Prostate gland (tissue), 2 donors: ENCODE measurements at regions of chr17 and their contacts with region 1.

Region 1: DNA sequence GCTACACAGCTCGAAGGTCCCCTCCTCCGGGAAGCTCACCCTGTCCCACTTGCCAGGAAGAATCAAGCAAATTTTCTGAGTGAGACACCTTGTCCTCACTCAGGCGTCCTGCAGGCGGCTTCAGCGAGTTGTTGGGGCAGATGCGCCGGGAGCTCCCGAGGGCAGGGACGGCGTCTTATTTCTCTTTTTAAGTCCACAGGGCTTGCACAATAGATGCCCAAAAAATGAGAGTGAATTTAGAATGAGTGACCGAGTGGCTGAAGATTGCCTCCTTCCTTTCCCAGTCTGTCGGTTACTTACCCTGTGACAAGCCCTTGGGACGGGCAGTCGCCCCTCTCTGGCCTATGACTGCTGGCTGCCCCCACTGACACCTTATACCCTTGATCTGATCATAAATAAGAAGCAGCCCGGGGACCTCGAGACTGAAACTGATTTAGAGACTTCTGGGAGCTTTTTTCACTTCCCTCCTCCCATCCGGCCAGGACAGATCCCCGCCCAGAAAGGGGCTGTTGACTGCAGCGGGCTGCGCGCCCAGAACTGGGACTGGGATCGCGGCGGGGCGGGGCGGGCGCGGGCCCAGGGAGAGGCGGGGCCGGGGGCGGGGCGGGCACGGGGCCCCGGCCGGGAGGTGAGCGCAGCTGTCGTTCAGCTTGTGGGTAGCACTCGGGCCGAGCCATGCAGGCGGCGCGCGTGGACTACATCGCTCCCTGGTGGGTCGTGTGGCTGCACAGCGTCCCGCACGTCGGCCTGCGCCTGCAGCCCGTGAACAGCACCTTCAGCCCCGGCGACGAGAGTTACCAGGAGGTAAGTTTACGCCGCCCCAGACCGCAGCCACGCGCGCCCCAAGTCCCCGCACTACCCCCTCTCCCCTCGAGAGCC is at the start of gene TTYH2:
- DNase-seq: peak; percentile 90
- H3K4me3 ChIP-seq: peak within 1 kb of the TSS; percentile 34 to 44
- H3K27ac ChIP-seq: peak within 1 kb of the TSS; percentile 74
- H3K4me1 ChIP-seq: peaks cover 7% of the 10 kb centered on the region
- H3K27me3 ChIP-seq: no peaks in the 10 kb centered on the region
- CTCF ChIP-seq: peak in 1 of 4 experiments; percentile 20
- POLR2A ChIP-seq: peak; percentile 53
- total RNA-seq, gene TTYH2: 7.7 to 43.3 TPM

Region 2: DNA sequence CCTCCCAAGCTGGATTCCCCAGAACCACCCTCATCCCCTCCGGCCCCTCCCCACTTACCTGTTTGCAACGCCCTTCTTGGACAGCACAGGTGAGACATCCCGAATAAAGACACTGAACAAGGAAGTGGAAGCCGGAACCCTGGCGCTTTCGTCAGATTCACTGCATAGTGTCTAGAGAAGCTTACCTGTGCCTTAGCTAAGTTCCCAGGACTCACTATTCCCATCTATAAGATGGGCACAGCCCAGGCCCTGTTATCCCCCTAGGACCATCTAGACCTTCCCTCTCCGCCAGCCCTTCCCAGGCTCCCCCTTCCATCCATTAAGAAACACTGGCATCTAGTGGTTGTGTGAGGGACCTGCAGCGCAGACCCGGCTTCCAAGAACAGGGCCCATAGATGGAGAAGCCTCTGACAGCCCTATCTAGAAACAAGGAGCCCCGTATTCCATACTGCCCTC is 36.6 kb before region 1 on chr17:
- intact Hi-C with region 1: no loop called
- DNase-seq: peak; percentile 32
- H3K4me3 ChIP-seq: no peak overlapping the region
- H3K27ac ChIP-seq: no peak overlapping the region
- H3K4me1 ChIP-seq: no peaks in the 10 kb centered on the region
- H3K27me3 ChIP-seq: no peaks in the 10 kb centered on the region
- CTCF ChIP-seq: peak; percentile 21 to 82 (median 68)
- POLR2A ChIP-seq: no peak

Region 3: DNA sequence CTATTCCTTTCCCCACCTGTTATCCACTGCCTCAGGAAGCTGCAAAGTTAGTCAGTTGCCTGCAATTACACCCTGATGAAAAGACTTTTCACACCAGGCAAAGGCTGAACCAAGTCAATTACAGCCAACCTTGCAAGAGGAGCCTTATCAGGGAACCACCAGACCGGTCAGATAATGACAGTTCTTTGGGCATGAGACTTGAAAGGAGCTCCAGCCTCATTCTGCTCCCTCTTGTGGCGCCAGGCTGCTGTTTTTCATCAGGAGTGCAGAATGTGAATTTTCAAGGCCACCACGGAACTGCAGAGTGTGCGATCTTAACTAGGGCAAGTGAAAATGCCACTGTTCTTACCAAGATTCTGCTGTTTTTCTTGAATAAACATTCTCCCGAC is 83.4 kb after region 1 on chr17:
- intact Hi-C with region 1: loop called (anchors 5 kb)
- DNase-seq: peak; percentile 42
- H3K4me3 ChIP-seq: no peak overlapping the region
- H3K27ac ChIP-seq: no peak overlapping the region
- H3K4me1 ChIP-seq: no peaks in the 10 kb centered on the region
- H3K27me3 ChIP-seq: no peaks in the 10 kb centered on the region
- CTCF ChIP-seq: peak in 3 of 4 experiments; percentile 38 to 59 (median 45)
- POLR2A ChIP-seq: no peak

Region 4: DNA sequence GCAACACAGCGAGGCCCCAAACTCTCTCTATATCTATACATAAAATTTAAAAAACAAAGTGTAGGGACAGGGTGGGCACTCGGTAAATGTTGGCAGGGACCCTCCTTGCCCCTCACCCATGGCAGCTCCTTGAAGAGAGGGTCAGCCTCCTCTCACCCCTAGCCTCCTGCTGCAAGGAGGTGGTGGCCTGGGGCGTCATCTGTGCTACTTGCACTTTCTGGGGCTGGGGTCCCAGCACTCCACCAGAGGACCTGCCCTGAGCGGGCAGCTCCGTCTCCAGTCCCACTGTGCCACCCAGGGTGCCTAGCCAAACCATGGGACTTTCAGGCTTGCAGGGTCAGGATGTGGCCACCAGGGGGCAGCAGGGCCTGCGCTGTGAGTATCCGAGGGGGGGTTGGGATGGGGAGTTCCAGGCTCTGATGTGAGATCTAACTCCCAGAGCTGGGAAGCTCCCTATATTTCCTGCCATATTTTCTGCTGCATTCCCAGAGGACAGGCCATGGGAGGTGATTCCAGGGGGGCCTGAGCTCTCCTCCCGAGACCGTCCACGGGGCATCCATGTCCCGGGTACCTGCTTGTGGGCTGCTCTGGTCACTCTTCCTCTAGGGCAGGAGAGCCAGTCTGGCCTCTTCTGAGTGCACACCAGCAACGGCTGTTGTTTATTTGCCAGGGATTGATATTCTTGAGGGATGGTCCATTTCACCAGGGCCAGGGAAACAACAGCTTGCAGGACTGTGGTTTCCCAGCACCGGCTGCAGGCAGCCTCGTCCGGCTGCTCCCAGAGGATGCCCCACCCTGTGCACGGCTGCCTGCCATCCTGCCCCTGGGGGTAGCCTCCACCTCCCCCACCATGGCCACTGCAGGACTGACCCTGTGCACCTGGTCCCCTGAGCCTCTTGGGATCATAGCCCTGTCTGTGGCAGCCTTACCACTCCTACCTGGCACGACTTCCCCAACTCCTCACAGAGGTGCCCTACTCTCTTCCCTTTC is 155.2 kb after region 1 on chr17:
- intact Hi-C with region 1: loop called (anchors 5 kb)
- DNase-seq: peak; percentile 54
- H3K4me3 ChIP-seq: no peak overlapping the region
- H3K27ac ChIP-seq: no peak overlapping the region
- H3K4me1 ChIP-seq: no peaks in the 10 kb centered on the region
- H3K27me3 ChIP-seq: no peaks in the 10 kb centered on the region
- CTCF ChIP-seq: peak; percentile 86 to 92 (median 87)
- POLR2A ChIP-seq: no peak

Region 5: DNA sequence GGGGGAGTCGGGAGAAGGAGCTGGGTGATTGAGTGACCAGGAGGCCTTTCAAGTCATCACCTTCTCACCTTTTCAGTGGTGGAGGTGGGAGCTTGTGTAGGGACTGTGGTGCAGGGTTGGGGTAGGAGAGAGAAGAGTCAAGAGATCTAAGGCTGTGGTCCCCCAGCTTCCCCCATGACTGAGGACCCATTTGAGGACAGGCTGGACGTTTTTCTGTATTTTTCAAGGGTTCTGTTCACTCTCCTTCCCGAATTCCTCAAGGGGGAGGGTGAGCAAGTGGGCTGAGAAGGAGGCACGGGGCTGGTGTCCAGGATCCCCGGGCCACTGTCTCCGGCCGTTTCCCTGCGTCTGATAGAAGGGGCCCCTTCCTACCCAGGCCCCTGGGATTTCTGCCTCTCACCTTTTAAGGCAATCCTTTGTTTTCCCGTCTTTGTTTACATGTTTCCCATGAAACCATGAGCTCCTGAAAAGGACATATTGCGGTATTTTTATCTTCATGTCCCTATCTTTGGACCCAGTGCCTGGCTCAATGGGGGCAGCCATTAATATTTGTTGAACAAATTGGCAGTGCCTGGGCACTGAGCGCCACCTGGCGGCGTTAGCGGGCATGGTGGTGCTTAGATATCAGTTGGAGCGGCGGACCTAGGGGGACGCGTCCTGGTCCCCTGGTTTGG is 244.1 kb after region 1 on chr17:
- intact Hi-C with region 1: loop called (anchors 5 kb)
- DNase-seq: peak; percentile 72
- H3K4me3 ChIP-seq: no peak overlapping the region
- H3K27ac ChIP-seq: no peak overlapping the region
- H3K4me1 ChIP-seq: peaks cover 15% of the 10 kb centered on the region
- H3K27me3 ChIP-seq: no peaks in the 10 kb centered on the region
- CTCF ChIP-seq: peak; percentile 97 to 99 (median 98)
- POLR2A ChIP-seq: no peak

Region 6: DNA sequence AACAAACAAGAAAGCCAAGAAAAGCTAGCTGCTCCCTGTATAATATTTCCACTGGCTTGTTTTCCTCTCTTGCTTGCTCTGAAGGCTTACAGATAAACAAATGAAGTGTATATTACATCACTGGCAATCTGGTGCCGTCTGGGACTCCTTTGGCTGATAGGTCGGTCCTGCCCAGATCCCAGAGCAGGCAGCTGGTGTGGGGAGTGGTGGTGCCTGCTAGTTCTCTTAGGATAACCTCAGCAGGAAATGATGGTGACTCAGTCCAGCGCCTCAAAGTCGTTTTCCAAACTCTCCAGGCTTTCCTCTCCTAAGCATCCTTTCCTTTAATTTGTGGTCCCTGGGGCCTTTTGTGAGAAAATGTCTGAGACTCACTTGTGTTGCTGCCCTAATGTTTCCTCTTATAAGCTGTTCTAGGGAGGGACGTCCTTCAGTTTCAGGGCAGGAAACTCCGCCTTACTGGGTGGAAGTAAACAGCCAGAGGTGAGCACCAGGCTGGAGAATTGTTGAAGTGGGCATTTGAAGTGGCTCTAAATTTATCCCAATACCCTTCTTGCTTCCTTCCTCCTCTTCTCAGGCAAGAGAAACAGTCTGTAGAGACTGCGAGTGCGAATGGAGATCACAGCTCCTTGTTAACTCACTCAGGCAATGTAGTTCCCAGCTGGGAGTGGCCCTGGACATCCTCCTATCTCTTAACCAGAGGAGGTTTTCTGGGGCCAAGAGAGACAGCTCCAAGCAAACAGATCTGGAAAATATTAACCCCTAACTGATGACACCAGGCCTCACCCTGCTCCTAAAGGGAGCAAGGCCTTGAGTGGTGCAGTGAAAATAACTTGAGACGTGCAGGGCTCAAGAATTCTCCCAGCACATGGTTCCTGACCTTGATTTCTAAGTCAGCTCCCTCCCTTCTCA is 464.7 kb after region 1 on chr17:
- intact Hi-C with region 1: no loop called
- DNase-seq: no peak
- H3K4me3 ChIP-seq: no peak overlapping the region
- H3K27ac ChIP-seq: no peak overlapping the region
- H3K4me1 ChIP-seq: no peaks in the 10 kb centered on the region
- H3K27me3 ChIP-seq: no peaks in the 10 kb centered on the region
- CTCF ChIP-seq: no peak
- POLR2A ChIP-seq: no peak